ENCODE measurements at regions of chr7 and their contacts with region 1.

Region 1: DNA sequence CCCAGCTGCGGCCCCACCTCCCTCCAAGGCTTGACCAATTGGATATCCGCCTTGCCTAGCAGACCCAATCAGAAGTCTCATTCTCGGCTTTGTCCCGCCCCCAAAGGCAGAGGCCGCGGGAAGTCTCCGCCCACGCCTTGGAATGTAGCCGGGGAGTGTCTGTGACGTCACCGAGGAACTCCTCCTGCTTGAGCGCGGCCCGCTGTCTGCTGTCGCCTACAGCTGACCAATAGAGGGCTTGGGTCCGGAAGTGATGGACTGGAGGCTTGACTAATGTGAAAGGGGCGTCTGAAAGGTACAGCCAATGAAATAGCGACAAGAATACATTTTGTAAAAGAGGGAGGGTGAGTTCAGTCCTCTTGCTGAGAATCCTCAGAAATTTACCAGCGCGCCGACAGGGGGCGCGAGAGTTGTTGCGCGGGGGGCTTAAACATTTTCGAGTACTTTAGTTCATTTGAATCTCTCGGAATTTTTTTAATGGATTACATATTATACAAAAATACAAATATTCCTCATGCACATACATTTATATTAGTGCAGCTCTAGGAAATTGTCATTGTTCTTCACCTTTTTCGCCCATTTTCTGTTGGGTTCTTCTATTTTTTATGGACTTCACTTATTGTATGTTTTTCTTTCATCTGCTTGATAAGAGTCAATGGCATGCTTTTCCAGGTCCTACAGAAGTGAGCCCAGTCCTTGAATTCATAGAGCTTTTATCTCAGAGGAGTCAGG is 376 bp upstream of the CREB3L2 start:
- DNase-seq: peak; percentile 99
- ATAC-seq: peak; percentile 92
- H3K4me3 ChIP-seq: peak overlapping the region; percentile 83
- H3K27ac ChIP-seq: peak overlapping the region; percentile 55
- H3K4me1 ChIP-seq: peaks cover 6% of the 10 kb centered on the region
- H3K27me3 ChIP-seq: no peaks in the 10 kb centered on the region
- CTCF ChIP-seq: peak; percentile 85 to 95 (median 90)
- EP300 ChIP-seq: no peak
- POLR2A ChIP-seq: no peak
- RAD21 ChIP-seq: peak; percentile 62

Region 2: DNA sequence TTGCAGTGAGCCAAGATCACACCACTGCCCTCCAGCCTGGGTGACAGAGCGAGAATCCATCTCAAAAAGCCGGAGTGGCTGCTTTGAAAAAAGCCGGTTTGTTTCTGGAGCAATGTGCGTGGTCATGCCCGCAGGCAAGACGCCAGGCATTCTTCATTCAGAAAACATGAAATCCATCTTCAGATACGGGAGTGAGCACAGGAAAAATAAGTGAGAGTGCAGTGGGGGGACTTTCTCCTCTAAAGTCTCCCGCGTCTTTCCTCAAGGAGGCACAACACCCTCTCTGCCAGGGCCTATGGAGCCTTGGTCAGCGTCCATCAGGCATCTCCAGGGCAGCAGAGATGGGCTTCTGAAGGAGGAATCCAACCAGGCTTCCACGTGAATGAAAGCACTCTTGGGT is 93.2 kb before region 1 on chr7:
- CTCF ChIA-PET with region 1: interaction called, 704 read pairs
- POLR2A ChIA-PET with region 1: interaction called, 8 read pairs
- RAD21 ChIA-PET with region 1: interaction called, 340 read pairs
- SMC1A ChIA-PET with region 1: interaction called, 436 read pairs
- in situ Hi-C with region 1: loop called (anchors 5 kb)
- intact Hi-C with region 1: no loop called
- DNase-seq: no peak
- ATAC-seq: no peak
- H3K4me3 ChIP-seq: no peak overlapping the region
- H3K27ac ChIP-seq: no peak overlapping the region
- H3K4me1 ChIP-seq: no peaks in the 10 kb centered on the region
- H3K27me3 ChIP-seq: no peaks in the 10 kb centered on the region
- CTCF ChIP-seq: no peak
- EP300 ChIP-seq: no peak
- POLR2A ChIP-seq: no peak
- RAD21 ChIP-seq: no peak

Region 3: DNA sequence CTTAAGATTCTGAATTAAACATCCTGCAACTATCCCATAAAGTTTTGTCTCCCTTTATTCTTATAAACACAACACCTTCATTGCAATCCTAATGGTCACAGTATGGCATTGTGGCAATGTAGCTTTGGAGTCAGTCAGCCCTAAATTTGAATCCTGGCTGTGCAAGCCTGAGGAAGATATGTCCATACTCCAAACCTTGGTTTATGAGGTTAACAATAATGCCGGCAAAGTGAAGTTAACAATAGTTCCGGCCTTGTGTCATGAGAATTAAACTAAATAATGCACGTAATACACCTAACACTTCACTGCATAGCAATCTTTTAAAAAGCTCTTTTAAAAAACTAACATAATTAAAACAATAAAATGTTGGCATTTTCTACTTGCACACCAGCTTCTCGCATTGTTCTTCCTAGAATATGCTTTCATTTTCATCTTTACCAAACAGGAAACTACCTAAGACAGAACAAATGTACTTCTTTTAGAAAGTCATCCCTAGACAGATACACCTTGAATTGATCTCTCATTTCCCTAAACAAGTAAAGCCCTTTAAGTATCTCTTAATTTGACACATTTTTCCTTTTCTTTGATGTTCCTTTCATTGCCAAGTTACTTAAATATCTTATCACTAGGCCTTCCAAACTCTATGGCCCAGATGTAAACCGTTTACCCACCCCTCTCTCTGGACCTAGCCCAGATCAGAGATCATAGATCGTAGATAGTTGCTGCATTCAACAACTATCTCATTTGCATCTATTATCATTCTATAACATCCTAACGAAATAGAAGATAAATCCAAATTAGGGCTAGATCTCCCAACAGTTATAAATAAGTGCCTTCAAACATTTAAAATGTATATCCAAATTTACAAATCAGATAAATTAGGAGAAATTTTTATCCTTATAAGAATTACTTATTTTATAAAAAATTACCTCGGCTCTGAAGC is 67.0 kb before region 1 on chr7:
- CTCF ChIA-PET with region 1: interaction called, 132 read pairs
- POLR2A ChIA-PET with region 1: interaction called, 18 read pairs
- RAD21 ChIA-PET with region 1: interaction called, 43 read pairs
- SMC1A ChIA-PET with region 1: interaction called, 57 read pairs
- in situ Hi-C with region 1: no loop called
- intact Hi-C with region 1: loop called (anchors 2 kb)
- DNase-seq: peak; percentile 30
- ATAC-seq: peak; percentile 88
- H3K4me3 ChIP-seq: peak overlapping the region; percentile 73
- H3K27ac ChIP-seq: peak overlapping the region; percentile 92
- H3K4me1 ChIP-seq: peaks cover 35% of the 10 kb centered on the region
- H3K27me3 ChIP-seq: no peaks in the 10 kb centered on the region
- CTCF ChIP-seq: no peak
- EP300 ChIP-seq: peak in 1 of 2 experiments; percentile 26; a peak in 1 of 4 replicates
- POLR2A ChIP-seq: no peak
- RAD21 ChIP-seq: no peak

Region 4: GRCh38 chr7:137956183-137956936 is 45.9 kb before region 1 on chr7:
- CTCF ChIA-PET with region 1: interaction called, 9 read pairs
- POLR2A ChIA-PET with region 1: interaction called, 7 read pairs
- RAD21 ChIA-PET with region 1: interaction called, 5 read pairs
- SMC1A ChIA-PET with region 1: interaction called, 13 read pairs
- in situ Hi-C with region 1: no loop called
- intact Hi-C with region 1: loop called (anchors 2 kb)
- DNase-seq: no peak
- ATAC-seq: no peak
- H3K4me3 ChIP-seq: no peak overlapping the region
- H3K27ac ChIP-seq: no peak overlapping the region
- H3K4me1 ChIP-seq: peaks cover 32% of the 10 kb centered on the region
- H3K27me3 ChIP-seq: no peaks in the 10 kb centered on the region
- CTCF ChIP-seq: no peak
- EP300 ChIP-seq: no peak
- POLR2A ChIP-seq: no peak
- RAD21 ChIP-seq: no peak

Region 5: GRCh38 chr7:137978464-137979237 is 23.6 kb before region 1 on chr7:
- CTCF ChIA-PET with region 1: interaction called, 271 read pairs
- POLR2A ChIA-PET with region 1: interaction called, 127 read pairs
- RAD21 ChIA-PET with region 1: interaction called, 148 read pairs
- SMC1A ChIA-PET with region 1: interaction called, 516 read pairs
- in situ Hi-C with region 1: no loop called
- intact Hi-C with region 1: no loop called
- DNase-seq: no peak
- ATAC-seq: no peak
- H3K4me3 ChIP-seq: no peak overlapping the region
- H3K27ac ChIP-seq: peak overlapping the region; percentile 9; the same call in 1 of the 2 replicates
- H3K4me1 ChIP-seq: peaks cover 69% of the 10 kb centered on the region
- H3K27me3 ChIP-seq: no peaks in the 10 kb centered on the region
- CTCF ChIP-seq: no peak
- EP300 ChIP-seq: no peak
- POLR2A ChIP-seq: no peak
- RAD21 ChIP-seq: no peak

Region 6: GRCh38 chr7:138015096-138015495 is 12.8 kb after region 1 on chr7:
- CTCF ChIA-PET with region 1: interaction called, 44 read pairs
- POLR2A ChIA-PET with region 1: interaction called, 3 read pairs
- RAD21 ChIA-PET with region 1: interaction called, 7 read pairs
- SMC1A ChIA-PET with region 1: interaction called, 45 read pairs
- in situ Hi-C with region 1: no loop called
- intact Hi-C with region 1: no loop called
- DNase-seq: no peak
- ATAC-seq: no peak
- H3K4me3 ChIP-seq: no peak overlapping the region
- H3K27ac ChIP-seq: no peak overlapping the region
- H3K4me1 ChIP-seq: no peaks in the 10 kb centered on the region
- H3K27me3 ChIP-seq: no peaks in the 10 kb centered on the region
- CTCF ChIP-seq: no peak
- EP300 ChIP-seq: no peak
- POLR2A ChIP-seq: no peak
- RAD21 ChIP-seq: no peak

Region 7: GRCh38 chr7:138204285-138204981 is 202.2 kb after region 1 on chr7:
- CTCF ChIA-PET with region 1: no interaction called
- POLR2A ChIA-PET with region 1: no interaction called
- RAD21 ChIA-PET with region 1: no interaction called
- SMC1A ChIA-PET with region 1: no interaction called
- in situ Hi-C with region 1: no loop called
- intact Hi-C with region 1: no loop called
- DNase-seq: no peak
- ATAC-seq: no peak
- H3K4me3 ChIP-seq: no peak overlapping the region
- H3K27ac ChIP-seq: no peak overlapping the region
- H3K4me1 ChIP-seq: no peaks in the 10 kb centered on the region
- H3K27me3 ChIP-seq: no peaks in the 10 kb centered on the region
- CTCF ChIP-seq: no peak
- EP300 ChIP-seq: no peak
- POLR2A ChIP-seq: no peak
- RAD21 ChIP-seq: no peak

Region 8: GRCh38 chr7:138738551-138739335 is 736.5 kb after region 1 on chr7:
- CTCF ChIA-PET with region 1: interaction called, 10 read pairs
- POLR2A ChIA-PET with region 1: no interaction called
- RAD21 ChIA-PET with region 1: interaction called, 12 read pairs
- SMC1A ChIA-PET with region 1: interaction called, 14 read pairs
- in situ Hi-C with region 1: loop called (anchors 5 kb)
- intact Hi-C with region 1: no loop called
- DNase-seq: peak; percentile 64
- ATAC-seq: peak; percentile 99
- H3K4me3 ChIP-seq: no peak overlapping the region
- H3K27ac ChIP-seq: no peak overlapping the region
- H3K4me1 ChIP-seq: no peaks in the 10 kb centered on the region
- H3K27me3 ChIP-seq: no peaks in the 10 kb centered on the region
- CTCF ChIP-seq: peak; percentile 87 to 98 (median 94); a peak in 5 of 6 replicates
- EP300 ChIP-seq: no peak
- POLR2A ChIP-seq: no peak
- RAD21 ChIP-seq: peak; percentile 98